ENCODE measurements at regions of chr9 and their contacts with region 1.

Region 1: DNA sequence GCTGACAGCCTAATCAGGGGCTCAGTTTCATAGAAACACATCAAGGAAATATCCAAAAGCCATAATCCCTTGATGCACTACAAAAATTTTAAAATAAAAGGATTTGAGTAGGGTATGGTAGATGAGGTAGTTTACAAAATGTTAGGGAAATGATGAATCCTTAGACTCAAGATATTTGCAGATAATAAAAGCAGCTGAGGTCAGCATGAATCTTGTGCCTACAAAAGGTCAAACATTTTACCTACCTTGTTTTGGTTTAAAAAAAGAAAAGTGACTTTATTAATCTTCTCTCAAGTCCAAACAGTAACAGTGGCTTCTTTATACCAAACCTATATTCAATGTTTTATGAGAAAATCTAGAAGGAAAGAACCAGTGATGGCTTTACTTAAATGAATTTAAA is 135.5 kb downstream of the BNC2 start:
- DNase-seq: no peak

Region 2: DNA sequence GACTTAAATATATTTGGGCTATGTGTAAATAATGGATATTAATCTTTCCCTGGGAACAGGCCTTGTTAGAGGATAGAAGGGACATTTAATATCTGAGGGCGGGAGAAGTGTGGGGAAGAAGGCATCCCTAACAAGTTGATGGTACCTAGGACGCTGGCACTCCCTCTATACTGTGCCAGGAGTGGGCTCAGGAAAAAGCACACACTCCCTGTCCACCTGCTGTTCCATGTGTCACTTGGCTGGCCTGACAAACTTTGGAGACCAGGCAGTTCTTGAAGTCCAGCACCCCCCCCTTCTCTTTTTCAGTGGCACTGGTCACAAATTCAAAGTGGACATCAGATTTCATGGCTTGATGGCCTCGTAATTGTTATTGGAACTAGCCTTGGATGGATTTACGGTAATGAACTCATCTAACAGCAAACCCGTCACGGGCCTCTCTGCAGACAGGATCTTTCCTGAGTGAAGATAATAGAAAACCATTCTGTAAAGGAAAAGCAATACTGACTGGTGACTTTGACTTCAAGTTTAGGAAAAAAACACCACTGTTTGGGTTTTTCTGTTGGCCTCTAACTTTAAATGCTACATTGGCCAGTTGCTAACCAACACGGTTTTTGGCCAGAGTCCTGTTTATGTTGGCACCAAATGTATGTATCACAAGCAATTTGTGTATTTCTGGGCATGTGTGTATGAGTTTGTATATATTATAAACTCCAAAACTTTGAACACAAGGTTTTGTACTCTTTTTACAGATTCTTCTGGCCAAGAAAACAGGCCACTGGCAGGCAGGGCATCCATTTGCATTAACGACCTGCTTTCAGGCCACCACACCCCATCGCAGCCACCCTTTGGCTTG is 629.6 kb before region 1 on chr9:
- intact Hi-C with region 1: loop called in 1 of 2 experiments (anchors 5 kb)
- DNase-seq: no peak

Region 3: GRCh38 chr9:16771356-16771755 is 36.4 kb after region 1 on chr9:
- intact Hi-C with region 1: no loop called
- DNase-seq: no peak

Region 4: DNA sequence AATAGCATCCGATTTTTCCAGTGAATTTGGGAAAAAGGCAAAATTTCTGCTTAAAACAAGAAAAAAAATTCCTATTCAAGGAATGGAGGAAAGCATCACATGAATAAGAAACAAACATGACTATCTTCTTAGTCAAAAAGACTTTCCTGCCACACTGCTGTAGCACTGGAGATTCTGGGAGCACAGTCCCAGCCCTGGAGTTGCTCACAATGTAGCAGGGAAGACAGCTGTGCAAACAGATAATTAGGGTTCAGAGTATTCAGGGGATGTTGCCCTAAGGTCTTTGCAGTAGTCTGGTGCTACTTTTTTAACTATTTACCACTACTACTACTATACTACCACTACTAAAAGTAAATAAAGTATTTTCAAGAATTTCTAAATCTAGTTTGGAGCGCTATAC is 49.0 kb after region 1 on chr9:
- intact Hi-C with region 1: no loop called
- DNase-seq: no peak

Measured in posterior vena cava (tissue), 2 donors.